Activated naive CD4-positive, alpha-beta T cell treated with anti-CD3 and anti-CD28 coated beads for 36 hours (primary cell): ENCODE measurements at regions of chr3 and their contacts with region 1.

Region 1: DNA sequence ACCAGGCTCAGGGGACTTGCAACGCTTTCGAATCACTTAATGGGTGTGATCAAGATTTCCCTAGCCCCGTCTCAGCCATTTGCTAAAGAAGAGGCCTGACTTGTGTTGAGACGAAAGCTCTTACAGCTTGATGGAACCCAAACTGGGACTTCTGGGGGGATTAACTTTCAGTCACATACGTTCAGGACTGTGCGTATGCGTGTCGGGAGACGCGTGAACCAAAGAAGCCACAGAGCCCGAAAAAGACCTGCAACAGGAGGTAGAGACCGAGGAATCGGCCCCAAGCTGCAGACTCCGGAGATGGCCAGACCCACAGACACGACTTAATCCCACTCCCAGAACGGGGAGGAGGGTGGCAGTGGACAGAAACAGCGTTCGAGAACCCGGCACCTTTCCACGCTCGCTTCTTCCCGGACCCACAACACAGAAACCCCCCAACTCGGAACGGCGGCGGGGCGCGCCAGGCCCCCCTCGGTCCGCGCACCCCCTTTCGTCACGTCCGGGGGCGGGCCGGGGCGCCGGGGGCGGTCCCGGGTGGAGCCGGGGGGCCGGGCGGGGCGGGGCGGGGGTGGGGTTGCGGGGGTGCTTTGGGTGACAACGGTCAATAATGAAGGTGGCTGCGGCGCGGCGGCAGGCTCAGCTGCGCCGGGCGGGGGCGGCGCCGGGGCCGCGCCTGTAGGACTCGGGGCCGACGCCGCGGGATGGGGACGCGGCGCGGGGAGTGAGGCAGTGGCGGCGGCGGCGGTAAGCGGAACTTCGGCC is at the start of gene ATP11B:
- DNase-seq: peak; percentile 70
- H3K4me3 Mint-ChIP-seq: peak within 1 kb of the TSS; percentile 99
- H3K27ac Mint-ChIP-seq: peak within 1 kb of the TSS; percentile 97
- H3K4me1 Mint-ChIP-seq: peaks cover 25% of the 10 kb centered on the region
- H3K27me3 Mint-ChIP-seq: no peaks in the 10 kb centered on the region
- total RNA-seq, gene ATP11B: 86.6 to 92.3 TPM

Region 2: GRCh38 chr3:181265717-181266333 is 1527.3 kb before region 1 on chr3:
- CTCF ChIA-PET with region 1: no interaction called
- intact Hi-C with region 1: loop called (anchors 10 kb)
- DNase-seq: no peak
- H3K4me3 Mint-ChIP-seq: peak overlapping the region; percentile 57
- H3K27ac Mint-ChIP-seq: no peak overlapping the region
- H3K4me1 Mint-ChIP-seq: peaks cover 3% of the 10 kb centered on the region
- H3K27me3 Mint-ChIP-seq: peaks cover 6% of the 10 kb centered on the region

Region 3: DNA sequence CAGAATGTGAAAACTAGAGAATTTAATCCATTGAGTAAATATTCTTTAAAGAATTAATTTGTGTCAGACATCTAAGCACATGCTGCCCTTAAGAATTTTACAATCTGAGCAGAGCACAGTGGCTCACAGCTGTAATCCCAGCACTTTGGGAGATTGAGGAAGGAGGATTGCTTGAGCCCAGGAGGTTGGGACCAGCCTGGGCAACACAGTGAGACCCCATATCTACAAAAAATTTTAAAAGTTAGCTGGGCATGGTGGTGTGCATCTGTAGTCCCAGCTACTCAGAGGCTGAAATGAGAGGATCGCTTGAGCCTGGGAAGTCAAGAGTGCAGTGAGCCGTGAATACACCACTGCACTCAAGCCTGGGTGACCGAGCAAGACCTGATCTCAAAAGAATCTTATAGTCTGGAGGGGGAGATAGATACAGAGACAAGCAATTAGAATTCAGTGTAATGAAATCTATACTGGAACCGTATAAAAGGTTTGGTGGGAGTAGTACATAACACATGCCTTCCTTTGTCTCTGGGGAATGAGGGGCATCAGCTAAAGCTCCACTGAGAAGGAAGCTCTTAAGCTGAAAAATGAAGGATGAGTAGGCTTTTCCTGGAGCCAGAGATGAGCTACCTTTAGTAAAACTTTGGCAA is 21.5 kb after region 1 on chr3:
- CTCF ChIA-PET with region 1: interaction called, 3 read pairs
- intact Hi-C with region 1: loop called (anchors 2 kb)
- DNase-seq: no peak
- H3K4me3 Mint-ChIP-seq: no peak overlapping the region
- H3K27ac Mint-ChIP-seq: no peak overlapping the region
- H3K4me1 Mint-ChIP-seq: peaks cover 50% of the 10 kb centered on the region
- H3K27me3 Mint-ChIP-seq: no peaks in the 10 kb centered on the region

Region 4: DNA sequence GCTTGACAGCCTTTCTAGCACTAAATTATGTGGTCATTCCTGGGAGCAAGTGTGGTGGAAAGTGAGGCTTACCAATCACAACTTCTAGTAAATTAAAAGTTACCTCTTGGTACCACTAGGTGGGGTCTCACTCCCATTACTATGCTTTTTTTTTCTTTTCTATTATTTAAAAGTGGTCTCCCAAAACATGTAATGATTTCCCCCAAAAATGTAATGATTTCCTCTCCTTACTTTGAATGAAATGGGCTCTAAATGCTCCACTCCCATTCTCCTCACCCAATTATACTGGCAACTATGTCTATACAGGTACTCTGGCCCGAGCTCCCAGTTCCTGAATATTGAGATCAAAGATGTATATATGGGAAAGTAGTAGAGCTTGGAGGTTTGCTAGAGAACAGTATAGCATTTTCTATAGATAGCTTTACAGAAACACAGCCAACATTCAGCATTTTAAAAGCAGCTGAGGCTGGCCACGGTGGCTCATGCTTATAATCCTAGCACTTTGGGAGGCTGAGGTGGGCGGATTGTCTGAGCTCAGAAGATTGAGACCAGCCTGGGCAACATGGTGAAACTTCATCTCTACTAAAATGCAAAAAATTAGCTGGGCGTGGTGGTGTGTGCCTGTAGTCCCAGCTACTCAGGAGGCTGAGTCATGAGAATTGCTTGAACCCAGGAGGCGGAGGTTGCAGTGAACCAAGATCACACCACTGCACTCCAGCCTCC is 116.4 kb after region 1 on chr3:
- CTCF ChIA-PET with region 1: no interaction called
- intact Hi-C with region 1: no loop called
- DNase-seq: no peak
- H3K4me3 Mint-ChIP-seq: no peak overlapping the region
- H3K27ac Mint-ChIP-seq: peak overlapping the region; percentile 54
- H3K4me1 Mint-ChIP-seq: peaks cover 45% of the 10 kb centered on the region
- H3K27me3 Mint-ChIP-seq: no peaks in the 10 kb centered on the region

Region 5: GRCh38 chr3:183099026-183099837 is 306.1 kb after region 1 on chr3 and contains the start of gene MCCC1:
- CTCF ChIA-PET with region 1: no interaction called
- intact Hi-C with region 1: loop called (anchors 1 kb)
- DNase-seq: peak; percentile 99
- H3K4me3 Mint-ChIP-seq: peak within 1 kb of the TSS; percentile 97
- H3K27ac Mint-ChIP-seq: peak within 1 kb of the TSS; percentile 91
- H3K4me1 Mint-ChIP-seq: peaks cover 33% of the 10 kb centered on the region
- H3K27me3 Mint-ChIP-seq: no peaks in the 10 kb centered on the region
- total RNA-seq, gene MCCC1: 21.0 to 24.9 TPM

Region 6: DNA sequence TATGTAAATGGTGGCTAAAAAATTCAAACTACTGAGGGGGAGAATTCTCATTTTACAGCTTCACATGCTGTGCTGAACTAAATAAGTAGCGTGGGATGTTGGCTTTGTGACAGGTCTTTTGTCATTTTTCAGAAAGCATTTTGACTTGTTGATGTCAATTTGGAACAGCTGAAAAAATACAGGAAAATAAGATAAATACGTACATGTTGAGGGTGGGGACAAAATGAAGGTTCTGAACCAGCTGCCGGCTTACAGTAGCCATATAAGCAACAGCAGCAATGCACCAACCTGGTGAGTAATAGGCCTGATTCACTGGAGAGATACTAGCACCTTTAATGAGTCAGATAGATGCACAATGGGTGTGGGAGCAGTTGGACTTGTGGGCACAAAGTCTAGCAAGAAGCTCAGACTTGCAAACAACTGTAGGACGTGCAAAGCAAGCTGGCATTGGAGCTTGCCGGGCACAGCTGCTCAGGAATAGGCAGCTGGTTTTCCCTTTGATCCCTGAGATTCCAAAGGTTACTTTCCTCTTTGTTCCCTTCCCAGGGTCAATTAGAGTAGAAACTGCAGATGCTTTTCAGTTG is 472.8 kb after region 1 on chr3:
- CTCF ChIA-PET with region 1: no interaction called
- intact Hi-C with region 1: loop called (anchors 5 kb)
- DNase-seq: peak; percentile 80
- H3K4me3 Mint-ChIP-seq: no peak overlapping the region
- H3K27ac Mint-ChIP-seq: no peak overlapping the region
- H3K4me1 Mint-ChIP-seq: peaks cover 6% of the 10 kb centered on the region
- H3K27me3 Mint-ChIP-seq: no peaks in the 10 kb centered on the region